ENCODE measurements at regions of chr7 and their contacts with region 1.

Region 1: DNA sequence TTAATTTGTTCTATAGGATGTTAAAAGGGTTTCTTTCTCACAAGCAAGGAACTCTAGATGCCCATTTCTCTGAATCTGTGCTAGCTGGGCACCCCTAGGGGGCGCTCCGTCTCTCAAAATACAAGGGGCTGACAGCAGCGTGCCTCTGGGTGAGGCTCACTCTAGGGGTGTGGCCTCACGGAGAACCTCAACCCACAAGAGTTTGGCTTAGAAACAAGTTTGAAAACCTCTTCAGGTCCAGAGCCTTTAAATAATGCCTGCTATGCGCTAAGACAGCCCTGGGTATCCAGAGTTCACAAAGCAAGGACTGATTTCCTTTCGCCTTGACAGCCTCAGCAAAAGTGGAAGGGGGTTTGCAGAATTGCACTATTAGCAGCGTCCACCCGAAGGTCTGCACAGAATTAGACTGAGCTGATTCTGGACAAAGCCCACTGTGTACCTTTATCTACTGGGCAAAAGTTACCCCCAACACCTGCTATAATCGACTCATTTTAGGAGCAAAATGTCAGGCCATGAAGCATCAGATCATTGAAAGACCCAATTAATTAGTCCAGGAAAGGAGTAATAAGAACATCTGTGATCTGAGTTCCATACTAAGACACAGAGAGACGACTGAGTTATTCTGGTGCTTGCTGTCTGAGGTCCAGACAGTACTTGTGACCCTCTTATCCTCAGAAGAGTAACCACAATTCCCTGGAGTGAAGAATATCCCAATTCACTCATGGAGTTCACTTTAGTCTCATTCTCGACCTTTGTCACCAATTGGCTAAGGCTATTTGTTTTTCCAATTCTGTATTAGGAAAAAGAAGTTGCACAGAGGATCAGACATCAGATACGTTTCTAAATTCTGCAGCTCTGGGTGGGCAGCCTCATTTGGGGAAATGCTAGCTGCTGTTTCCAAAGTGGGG is 574 bp upstream of the CPED1 start:
- DNase-seq: peak; percentile 76 to 96
- H3K4me3 ChIP-seq: peak overlapping the region; percentile 57 to 68
- H3K27ac ChIP-seq: peak overlapping the region; percentile 88 to 91
- H3K4me1 ChIP-seq: peaks cover 0 to 3% of the 10 kb centered on the region in 2 donors
- H3K27me3 ChIP-seq: no peaks in the 10 kb centered on the region
- CTCF ChIP-seq: peak; percentile 87 to 94 (median 88)

Region 2: GRCh38 chr7:120441850-120442249 is 546.1 kb before region 1 on chr7:
- intact Hi-C with region 1: no loop called
- DNase-seq: no peak
- H3K4me3 ChIP-seq: no peak overlapping the region
- H3K27ac ChIP-seq: no peak overlapping the region
- H3K4me1 ChIP-seq: no peaks in the 10 kb centered on the region
- H3K27me3 ChIP-seq: no peaks in the 10 kb centered on the region
- CTCF ChIP-seq: no peak

Region 3: DNA sequence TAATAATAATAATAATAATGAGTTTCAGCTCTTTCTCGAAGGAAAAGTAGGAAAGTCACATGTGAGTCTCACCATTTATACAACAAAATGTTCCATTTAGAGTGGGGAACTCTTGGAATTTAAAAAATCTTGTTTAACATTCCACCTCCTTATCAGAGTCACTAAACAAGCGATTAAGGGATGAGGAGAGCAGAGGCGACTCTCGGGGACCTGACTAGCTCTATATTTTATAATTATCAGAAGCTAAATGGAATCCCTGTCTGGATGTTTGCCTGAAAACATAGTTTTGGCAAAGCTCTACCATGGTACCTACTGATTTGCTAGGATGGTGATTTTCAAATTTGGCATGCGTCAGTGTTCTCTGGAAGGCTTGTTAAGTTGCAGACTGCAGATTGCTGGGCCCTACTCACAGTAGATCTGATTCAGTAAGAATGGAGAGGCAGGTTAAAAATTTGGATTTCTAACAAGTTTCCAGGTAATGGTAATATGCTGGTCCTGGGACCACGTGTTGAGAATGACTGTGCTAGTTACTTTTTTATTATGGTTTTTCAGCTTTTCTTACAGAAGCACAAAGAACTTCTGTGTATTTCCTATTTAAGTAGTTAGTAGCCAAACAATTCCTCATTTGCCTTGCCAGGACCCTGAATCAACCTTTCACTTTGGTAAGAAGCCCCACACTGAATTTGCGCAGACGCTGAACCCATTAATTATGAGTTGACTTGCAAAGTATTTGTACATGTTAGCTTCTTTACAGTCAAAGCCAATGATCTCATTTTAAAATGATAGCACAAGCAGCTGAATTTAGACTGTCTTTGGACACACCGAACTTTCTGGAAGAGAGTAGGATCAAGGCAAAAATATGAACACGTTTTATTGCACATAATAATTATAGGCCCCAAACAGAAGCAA is 40.1 kb after region 1 on chr7:
- intact Hi-C with region 1: loop called (anchors 5 kb)
- DNase-seq: no peak
- H3K4me3 ChIP-seq: peak overlapping the region in 1 of 2 donors; percentile 36
- H3K27ac ChIP-seq: peak overlapping the region; percentile 38 to 78
- H3K4me1 ChIP-seq: peaks cover 5 to 29% of the 10 kb centered on the region in 2 donors
- H3K27me3 ChIP-seq: no peaks in the 10 kb centered on the region
- CTCF ChIP-seq: no peak

Region 4: GRCh38 chr7:121054925-121055324 is 67.0 kb after region 1 on chr7:
- intact Hi-C with region 1: no loop called
- DNase-seq: no peak
- H3K4me3 ChIP-seq: no peak overlapping the region
- H3K27ac ChIP-seq: no peak overlapping the region
- H3K4me1 ChIP-seq: peaks cover 0 to 2% of the 10 kb centered on the region in 2 donors
- H3K27me3 ChIP-seq: no peaks in the 10 kb centered on the region
- CTCF ChIP-seq: no peak

Region 5: GRCh38 chr7:121081327-121081936 is 93.5 kb after region 1 on chr7:
- intact Hi-C with region 1: loop called (anchors 1 kb)
- DNase-seq: no peak
- H3K4me3 ChIP-seq: no peak overlapping the region
- H3K27ac ChIP-seq: peak overlapping the region in 1 of 2 donors; percentile 28
- H3K4me1 ChIP-seq: peaks cover 6 to 69% of the 10 kb centered on the region in 2 donors
- H3K27me3 ChIP-seq: no peaks in the 10 kb centered on the region
- CTCF ChIP-seq: peak; percentile 62 to 82 (median 80)

Region 6: DNA sequence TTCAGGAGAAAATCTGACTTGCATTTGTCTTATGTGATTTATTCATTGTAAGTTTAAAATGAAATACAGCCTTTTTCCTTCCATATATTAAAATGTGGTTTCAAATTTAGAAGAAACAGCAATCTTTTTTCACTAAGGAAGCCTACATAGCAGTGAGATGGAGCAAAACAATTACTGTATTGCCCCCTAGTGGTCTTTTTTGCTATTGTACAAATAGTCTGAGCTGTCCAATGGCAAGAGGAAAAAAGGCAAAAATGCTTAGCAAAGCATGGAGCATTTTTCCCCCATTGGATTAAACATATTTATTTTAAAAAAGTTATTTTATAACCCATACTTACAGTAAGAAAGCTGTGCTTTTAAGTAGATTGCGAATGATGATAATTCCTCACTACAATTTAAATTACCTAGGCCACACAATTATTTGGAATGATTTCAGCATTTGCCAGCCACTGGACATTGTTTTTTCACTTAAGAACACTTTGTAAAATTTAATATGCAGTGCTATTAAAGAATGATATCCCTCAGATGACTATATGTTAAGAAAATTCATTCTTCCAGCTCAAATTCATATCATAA is 120.1 kb after region 1 on chr7:
- intact Hi-C with region 1: loop called (anchors 1 kb)
- DNase-seq: no peak
- H3K4me3 ChIP-seq: no peak overlapping the region
- H3K27ac ChIP-seq: no peak overlapping the region
- H3K4me1 ChIP-seq: no peaks in the 10 kb centered on the region
- H3K27me3 ChIP-seq: no peaks in the 10 kb centered on the region
- CTCF ChIP-seq: peak; percentile 69 to 78 (median 72)

Measured in ascending aorta (tissue), 2 donors.